ENCODE measurements at regions of chr2 and their contacts with region 1.

Region 1: GRCh38 chr2:207769597-207770486 is at the start of gene FZD5:
- DNase-seq: peak; percentile 91
- H3K4me3 Mint-ChIP-seq: peak within 1 kb of the TSS; percentile 80
- H3K27ac Mint-ChIP-seq: no peak within 1 kb of the TSS
- H3K4me1 Mint-ChIP-seq: peaks cover 31% of the 10 kb centered on the region
- H3K27me3 Mint-ChIP-seq: peaks cover 36% of the 10 kb centered on the region
- total RNA-seq, gene FZD5: 1.5 to 1.7 TPM

Region 2: GRCh38 chr2:207710814-207711740 is 58.8 kb before region 1 on chr2 and contains the start of gene CCNYL1:
- CTCF ChIA-PET with region 1: no interaction called
- intact Hi-C with region 1: loop called (anchors 1 kb)
- DNase-seq: peak; percentile 98
- H3K4me3 Mint-ChIP-seq: peak within 1 kb of the TSS; percentile 88
- H3K27ac Mint-ChIP-seq: peak within 1 kb of the TSS; percentile 56
- H3K4me1 Mint-ChIP-seq: peaks cover 26% of the 10 kb centered on the region
- H3K27me3 Mint-ChIP-seq: no peaks in the 10 kb centered on the region
- total RNA-seq, gene CCNYL1: 2.5 to 2.7 TPM

Region 3: DNA sequence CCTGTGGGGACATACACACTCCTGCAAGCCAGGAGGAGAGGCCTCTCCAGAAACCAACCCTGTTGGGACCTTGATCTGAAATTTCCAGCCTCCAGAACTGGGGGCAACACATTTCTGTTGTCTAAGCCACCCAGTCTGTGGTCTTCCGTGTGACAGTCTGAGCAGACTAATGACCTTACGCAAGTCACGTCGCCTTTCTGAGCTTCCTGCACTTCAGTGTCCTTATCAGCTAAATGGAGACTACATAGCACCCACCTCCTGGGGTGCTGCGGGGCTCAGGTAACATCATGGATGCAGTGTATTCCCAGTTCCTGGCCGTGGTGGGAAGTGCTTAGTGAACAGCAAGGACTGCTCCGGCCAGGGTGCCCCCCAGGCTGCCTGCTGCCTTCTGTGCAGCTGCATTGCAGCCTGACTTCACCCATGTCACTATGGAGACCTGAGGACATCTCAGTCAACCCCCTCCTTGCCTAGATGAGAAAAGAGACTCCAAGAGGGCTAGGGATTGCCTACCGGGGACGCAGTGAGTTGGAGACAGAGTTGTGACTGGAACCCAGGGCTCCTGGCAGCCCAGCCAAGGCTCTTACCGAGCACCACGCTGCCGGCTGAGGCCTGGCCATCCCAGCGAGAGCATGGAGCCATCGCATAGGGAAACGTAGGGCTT is 61.1 kb after region 1 on chr2:
- CTCF ChIA-PET with region 1: no interaction called
- intact Hi-C with region 1: loop called (anchors 1 kb)
- DNase-seq: no peak
- H3K4me3 Mint-ChIP-seq: no peak overlapping the region
- H3K27ac Mint-ChIP-seq: no peak overlapping the region
- H3K4me1 Mint-ChIP-seq: peaks cover 10% of the 10 kb centered on the region
- H3K27me3 Mint-ChIP-seq: no peaks in the 10 kb centered on the region

Region 4: DNA sequence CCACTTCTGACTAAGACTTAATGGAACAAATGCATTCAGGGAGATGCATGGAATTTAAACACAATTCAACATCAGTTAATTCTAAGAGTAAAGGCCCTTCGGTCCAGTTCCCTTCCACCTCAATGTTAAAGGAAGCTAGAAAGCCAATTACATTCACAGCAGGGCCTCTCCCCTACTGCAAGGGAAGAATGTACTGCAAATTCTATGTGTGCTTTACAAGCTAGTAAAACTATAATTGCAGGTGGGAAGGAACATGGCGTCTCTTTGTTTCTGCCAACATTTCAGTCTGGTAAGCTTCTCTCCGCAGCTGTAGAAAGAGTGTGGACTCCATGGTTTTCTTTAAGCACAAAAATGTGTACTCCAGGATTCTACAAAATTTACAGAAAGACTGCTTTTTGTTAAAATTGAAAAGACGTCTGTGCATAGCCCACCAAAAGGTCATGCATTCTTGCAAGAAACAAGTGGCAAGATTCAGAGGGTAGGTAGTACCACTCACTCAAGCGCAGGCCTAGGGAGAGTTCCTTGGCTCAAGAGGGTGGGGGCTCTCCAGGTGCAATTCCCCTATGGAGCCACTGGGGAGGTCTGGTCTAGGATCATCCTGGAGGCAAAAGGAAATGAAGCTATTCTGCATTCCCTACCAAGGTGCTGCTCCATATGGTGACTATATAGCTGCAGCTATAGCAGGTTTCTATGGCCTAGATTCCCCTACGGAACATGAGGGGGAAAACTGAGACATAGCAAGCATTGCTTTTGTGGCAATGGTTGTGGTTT is 126.9 kb after region 1 on chr2:
- CTCF ChIA-PET with region 1: no interaction called
- intact Hi-C with region 1: no loop called
- DNase-seq: no peak
- H3K4me3 Mint-ChIP-seq: no peak overlapping the region
- H3K27ac Mint-ChIP-seq: no peak overlapping the region
- H3K4me1 Mint-ChIP-seq: no peaks in the 10 kb centered on the region
- H3K27me3 Mint-ChIP-seq: no peaks in the 10 kb centered on the region

Region 5: DNA sequence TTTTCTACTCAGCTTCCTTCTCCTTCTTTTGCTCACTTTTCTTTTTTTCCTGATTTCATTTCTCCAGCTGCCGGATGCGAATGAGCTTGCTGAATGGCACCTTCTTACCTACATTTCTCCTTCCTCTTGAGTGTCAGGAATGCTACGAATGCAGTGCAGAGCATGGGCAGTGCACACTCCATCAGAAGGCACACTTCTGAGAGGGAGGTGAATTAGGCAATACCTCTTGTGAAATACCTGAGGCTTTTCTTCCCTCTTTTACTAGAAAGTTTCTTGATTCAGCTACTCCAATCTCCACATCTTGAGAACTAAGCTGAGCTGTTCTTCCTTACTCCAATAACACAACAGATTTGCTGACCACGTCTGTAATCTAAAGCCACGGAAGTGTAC is 204.4 kb after region 1 on chr2:
- CTCF ChIA-PET with region 1: interaction called, 4 read pairs
- intact Hi-C with region 1: loop called (anchors 1 kb)
- DNase-seq: no peak
- H3K4me3 Mint-ChIP-seq: no peak overlapping the region
- H3K27ac Mint-ChIP-seq: no peak overlapping the region
- H3K4me1 Mint-ChIP-seq: peaks cover 17% of the 10 kb centered on the region
- H3K27me3 Mint-ChIP-seq: no peaks in the 10 kb centered on the region

Region 6: GRCh38 chr2:208006833-208007232 is 237.0 kb after region 1 on chr2:
- CTCF ChIA-PET with region 1: no interaction called
- intact Hi-C with region 1: no loop called
- DNase-seq: no peak
- H3K4me3 Mint-ChIP-seq: no peak overlapping the region
- H3K27ac Mint-ChIP-seq: no peak overlapping the region
- H3K4me1 Mint-ChIP-seq: peaks cover 5% of the 10 kb centered on the region
- H3K27me3 Mint-ChIP-seq: no peaks in the 10 kb centered on the region

Region 7: DNA sequence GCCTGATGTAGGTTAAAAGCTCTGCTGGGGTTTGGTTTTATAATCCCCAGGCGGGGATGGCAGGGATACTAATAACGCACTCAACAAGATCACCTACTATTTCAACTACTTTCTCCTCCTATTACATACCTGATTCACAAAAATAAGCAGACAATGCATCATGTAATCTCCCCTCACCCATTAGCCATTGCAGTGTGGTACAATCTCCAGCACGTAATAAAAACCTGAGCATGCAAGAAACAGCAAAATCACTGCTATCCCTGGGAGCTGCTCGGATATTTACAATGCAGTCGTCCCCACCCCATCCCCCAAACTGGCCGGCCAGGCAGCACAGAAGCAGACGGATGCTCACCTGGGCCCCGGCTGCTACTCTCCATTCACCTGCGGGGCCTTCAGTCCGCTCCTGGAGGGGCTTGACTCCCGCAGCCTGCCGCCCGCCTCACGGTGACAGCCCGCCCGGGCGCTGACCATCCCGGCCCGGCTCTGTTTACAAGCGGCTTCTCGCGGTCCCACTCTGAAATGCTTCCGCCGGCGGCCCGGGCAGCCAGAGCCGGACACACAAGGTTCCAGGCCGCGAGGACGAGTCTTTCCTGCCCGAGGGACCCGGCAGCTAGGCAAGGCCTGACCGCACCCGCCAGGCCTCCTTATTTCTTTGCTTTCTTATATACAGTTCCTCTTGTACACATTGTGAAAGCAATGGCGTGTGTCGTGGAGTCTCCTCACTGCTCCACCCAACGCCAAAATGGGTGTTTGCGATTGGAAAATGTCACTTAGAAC is 255.4 kb after region 1 on chr2 and contains the start of gene PLEKHM3:
- CTCF ChIA-PET with region 1: interaction called, 6 read pairs
- intact Hi-C with region 1: loop called (anchors 1 kb)
- DNase-seq: peak; percentile 81
- H3K4me3 Mint-ChIP-seq: peak within 1 kb of the TSS; percentile 93
- H3K27ac Mint-ChIP-seq: peak within 1 kb of the TSS; percentile 88
- H3K4me1 Mint-ChIP-seq: peaks cover 14% of the 10 kb centered on the region
- H3K27me3 Mint-ChIP-seq: no peaks in the 10 kb centered on the region
- total RNA-seq, gene PLEKHM3: 6.5 to 7.0 TPM